ENCODE measurements at regions of chr19 and their contacts with region 1.

Region 1: DNA sequence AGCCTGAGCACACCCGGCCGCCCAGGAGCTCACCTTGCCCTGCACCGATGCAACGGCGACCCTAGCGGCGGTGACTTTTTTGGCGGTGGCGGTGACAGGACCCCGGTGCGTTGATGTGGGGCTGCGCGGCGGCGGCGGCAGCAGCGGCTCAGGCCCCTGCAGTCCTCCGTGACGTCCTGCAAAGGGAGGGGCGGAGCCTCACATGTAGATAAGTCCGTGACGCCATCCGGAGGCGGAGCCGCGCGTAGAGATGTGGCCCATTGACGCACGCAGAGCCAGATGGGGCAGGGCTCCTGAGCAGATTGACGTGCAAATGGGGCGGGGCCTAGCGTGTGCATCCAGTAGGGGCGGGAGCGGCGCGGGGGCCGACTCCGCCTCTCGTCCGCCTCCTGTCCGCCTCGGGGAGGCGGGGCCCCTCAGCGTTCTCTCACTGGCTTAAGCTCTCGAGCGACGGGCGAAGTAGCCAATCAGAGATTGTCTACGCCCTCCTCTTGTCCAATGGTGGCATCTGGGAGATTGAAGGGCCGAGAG is at the start of gene RAB3A:
- DNase-seq: peak; percentile 96 to 100 (median 98)
- ATAC-seq: peak; percentile 96
- H3K4me3 ChIP-seq: peak within 1 kb of the TSS; percentile 68
- H3K27ac ChIP-seq: peak within 1 kb of the TSS; percentile 86
- H3K4me1 ChIP-seq: peaks cover 14 to 45% of the 10 kb centered on the region in 2 experiments; a peak in 4 of 5 replicates
- H3K27me3 ChIP-seq: no peaks in the 10 kb centered on the region
- CTCF ChIP-seq: 0 out of 6 replicates have a peak, but pooled peaks of 1 of the 3 experiments have one; percentile 2
- EP300 ChIP-seq: no peak
- POLR2A ChIP-seq: no peak
- RAD21 ChIP-seq: no peak
- polyA plus RNA-seq, gene RAB3A: 0.17 TPM in 1 of 2 experiments, not detected in the other

Region 2: DNA sequence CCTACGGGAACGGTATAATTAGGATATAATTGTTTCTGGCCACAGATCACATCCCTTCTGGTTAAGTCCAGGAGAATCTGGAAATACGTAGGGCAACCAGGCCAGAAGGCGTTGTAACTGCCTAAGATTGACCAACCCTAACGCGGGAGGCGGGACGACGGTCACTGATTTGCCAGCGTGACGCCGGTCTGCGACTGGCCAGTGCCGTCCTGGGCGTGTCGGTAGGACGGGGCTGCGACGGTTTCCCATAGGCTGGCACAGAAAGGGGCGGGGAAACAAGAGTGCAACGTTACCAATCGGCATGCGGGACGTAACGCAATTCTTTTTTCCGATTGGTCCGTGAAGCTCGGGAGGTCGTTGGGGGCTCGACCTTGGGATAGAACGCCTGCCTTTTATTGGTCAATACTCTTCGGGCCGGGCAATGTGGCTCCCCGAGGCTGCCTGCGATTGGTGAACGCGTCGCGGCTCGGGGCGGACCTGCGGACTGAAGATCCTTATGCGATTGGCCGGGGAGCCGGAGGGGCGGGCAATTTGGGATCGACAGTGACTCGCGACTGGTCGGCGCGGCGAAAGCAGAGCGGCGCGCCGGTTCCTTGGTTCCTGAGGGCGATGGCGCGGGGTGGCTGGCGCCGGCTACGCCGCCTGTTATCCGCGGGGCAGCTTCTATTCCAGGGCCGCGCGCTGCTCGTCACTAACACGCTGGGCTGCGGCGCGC is 11.1 kb before region 1 on chr19 and contains the start of gene MPV17L2:
- CTCF ChIA-PET with region 1: interaction called, 3 read pairs
- POLR2A ChIA-PET with region 1: interaction called, 11 read pairs
- in situ Hi-C with region 1: no loop called
- intact Hi-C with region 1: no loop called
- DNase-seq: peak; percentile 89 to 100 (median 94)
- ATAC-seq: peak; percentile 93
- H3K4me3 ChIP-seq: peak within 1 kb of the TSS; percentile 89
- H3K27ac ChIP-seq: peak within 1 kb of the TSS; percentile 80
- H3K4me1 ChIP-seq: peaks cover 17 to 46% of the 10 kb centered on the region in 2 experiments; a peak in 4 of 5 replicates
- H3K27me3 ChIP-seq: no peaks in the 10 kb centered on the region
- CTCF ChIP-seq: no peak
- EP300 ChIP-seq: no peak
- POLR2A ChIP-seq: peak; percentile 83
- RAD21 ChIP-seq: no peak
- polyA plus RNA-seq, gene MPV17L2: 10.6 to 11.0 TPM

Region 3: GRCh38 chr19:18224525-18225354 is 20.8 kb after region 1 on chr19:
- CTCF ChIA-PET with region 1: no interaction called
- POLR2A ChIA-PET with region 1: interaction called, 13 read pairs
- in situ Hi-C with region 1: no loop called
- intact Hi-C with region 1: no loop called
- DNase-seq: peak; percentile 94 to 99 (median 96)
- ATAC-seq: peak; percentile 97
- H3K4me3 ChIP-seq: peak overlapping the region; percentile 48
- H3K27ac ChIP-seq: peak overlapping the region; percentile 84
- H3K4me1 ChIP-seq: peaks cover 23 to 61% of the 10 kb centered on the region in 2 experiments; a peak in 4 of 5 replicates
- H3K27me3 ChIP-seq: no peaks in the 10 kb centered on the region; a peak in 1 of 5 replicates
- CTCF ChIP-seq: no peak
- EP300 ChIP-seq: no peak
- POLR2A ChIP-seq: no peak
- RAD21 ChIP-seq: no peak

Region 4: DNA sequence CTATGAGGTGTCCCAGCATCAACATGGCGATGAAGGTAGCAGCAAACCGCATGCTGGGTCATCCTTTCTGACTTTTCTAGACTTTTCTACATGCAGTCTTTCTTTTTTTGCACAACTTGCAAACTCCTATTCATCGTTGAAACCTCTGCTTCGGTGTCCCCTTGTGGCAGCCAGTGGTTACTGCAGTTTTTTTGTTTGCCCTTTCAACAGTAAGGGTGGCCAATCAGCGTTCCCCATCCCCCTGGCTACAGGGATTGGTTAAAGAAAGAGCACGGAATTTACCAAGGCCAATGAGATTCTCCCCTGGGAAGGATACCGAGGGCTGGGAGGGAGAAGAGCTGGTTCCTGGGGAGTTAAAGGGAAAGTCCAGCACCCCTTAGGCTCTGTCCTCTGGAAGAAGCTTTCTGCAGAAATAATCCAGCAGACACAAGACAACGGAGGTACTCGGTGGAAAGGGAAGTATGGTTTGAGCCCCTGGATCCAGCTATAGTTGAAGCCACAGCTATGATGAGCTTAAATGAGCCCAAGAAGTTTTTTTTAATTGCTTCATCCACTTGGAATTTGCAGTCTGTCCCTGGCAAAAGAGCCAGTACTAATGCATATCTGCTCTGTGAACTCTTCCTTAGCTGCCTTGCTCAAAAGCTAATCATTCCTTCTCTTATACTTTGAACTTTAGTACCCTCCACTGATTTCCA is 124.6 kb after region 1 on chr19:
- CTCF ChIA-PET with region 1: interaction called, 5 read pairs
- POLR2A ChIA-PET with region 1: no interaction called
- in situ Hi-C with region 1: no loop called
- intact Hi-C with region 1: loop called (anchors 5 kb)
- DNase-seq: peak; percentile 96 to 99 (median 98)
- ATAC-seq: peak; percentile 100
- H3K4me3 ChIP-seq: peak overlapping the region; percentile 33
- H3K27ac ChIP-seq: peak overlapping the region; percentile 63
- H3K4me1 ChIP-seq: peaks cover 22 to 35% of the 10 kb centered on the region in 2 experiments
- H3K27me3 ChIP-seq: no peaks in the 10 kb centered on the region
- CTCF ChIP-seq: peak; percentile 87 to 97 (median 96)
- EP300 ChIP-seq: no peak
- POLR2A ChIP-seq: no peak; the same call in 1 of the 2 replicates
- RAD21 ChIP-seq: peak; percentile 85 to 87